Endothelial cell of umbilical vein (primary cell): ENCODE measurements at regions of chr17 and their contacts with region 1.

Region 1: GRCh38 chr17:19377602-19378392 is 501 bp upstream of the MAPK7 start:
- DNase-seq: peak; percentile 100
- H3K4me3 ChIP-seq: peak overlapping the region; percentile 72 to 94 (median 73)
- H3K27ac ChIP-seq: peak overlapping the region; percentile 59
- H3K4me1 ChIP-seq: peaks cover 7% of the 10 kb centered on the region
- H3K27me3 ChIP-seq: no peaks in the 10 kb centered on the region
- CTCF ChIP-seq: no peak
- POLR2A ChIP-seq: peak; percentile 83

Region 2: DNA sequence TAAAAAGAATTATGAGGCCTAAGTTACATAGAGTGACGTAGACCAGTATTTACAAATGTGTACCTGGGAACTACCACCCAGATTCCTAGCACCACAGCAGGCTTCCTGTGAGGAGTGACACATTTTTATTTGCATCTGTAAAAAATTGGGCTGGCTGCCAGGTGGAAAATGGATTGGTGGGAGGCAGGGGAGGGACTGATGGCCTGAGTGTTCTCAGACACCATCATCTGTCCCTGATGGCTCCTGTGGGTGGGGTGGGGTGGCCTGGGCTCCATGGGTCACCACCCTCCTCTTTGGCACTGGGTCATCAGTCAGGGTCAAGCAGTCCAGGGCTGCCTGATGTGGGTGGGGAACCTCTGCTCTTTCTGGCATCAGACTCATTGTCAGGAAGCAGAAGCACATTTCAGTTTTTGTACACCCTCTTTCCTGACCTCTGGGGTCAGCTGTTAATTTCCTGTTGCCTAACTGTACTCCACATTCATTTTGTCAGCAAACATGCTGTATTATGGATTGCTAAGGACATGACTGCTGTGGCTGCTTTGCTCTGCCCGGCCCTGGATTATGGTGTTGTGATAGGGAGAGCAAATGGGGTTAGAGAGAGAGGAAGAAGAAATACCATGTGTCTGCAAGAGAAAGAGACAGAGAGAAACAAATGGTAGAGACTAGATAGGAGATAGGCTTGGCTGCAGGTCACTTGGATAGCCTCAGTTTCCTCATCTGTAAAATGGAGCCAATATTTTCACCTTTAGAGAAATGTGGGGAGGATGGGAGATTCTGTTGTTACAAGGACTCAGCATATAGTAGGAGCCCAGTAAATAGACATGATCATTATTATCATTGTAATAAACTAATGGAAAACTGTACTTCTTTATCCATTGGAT is 20.7 kb after region 1 on chr17:
- CTCF ChIA-PET with region 1: no interaction called
- POLR2A ChIA-PET with region 1: no interaction called
- dilution Hi-C with region 1: no loop called
- intact Hi-C with region 1: no loop called
- DNase-seq: peak; percentile 68
- H3K4me3 ChIP-seq: no peak overlapping the region
- H3K27ac ChIP-seq: no peak overlapping the region
- H3K4me1 ChIP-seq: peaks cover 10% of the 10 kb centered on the region
- H3K27me3 ChIP-seq: peaks cover 0 to 2% of the 10 kb centered on the region in 2 experiments
- CTCF ChIP-seq: no peak
- POLR2A ChIP-seq: no peak

Region 3: GRCh38 chr17:19410875-19411620 is 33.3 kb after region 1 on chr17 and contains the start of gene RNF112:
- CTCF ChIA-PET with region 1: no interaction called
- POLR2A ChIA-PET with region 1: no interaction called
- dilution Hi-C with region 1: no loop called
- intact Hi-C with region 1: no loop called
- DNase-seq: no peak
- H3K4me3 ChIP-seq: no peak within 1 kb of the TSS
- H3K27ac ChIP-seq: no peak within 1 kb of the TSS
- H3K4me1 ChIP-seq: no peaks in the 10 kb centered on the region
- H3K27me3 ChIP-seq: peaks cover 4 to 7% of the 10 kb centered on the region in 2 experiments
- CTCF ChIP-seq: no peak
- POLR2A ChIP-seq: no peak
- total RNA-seq, gene RNF112: 0.11 TPM in 1 of 2 replicates, not detected in the other

Region 4: DNA sequence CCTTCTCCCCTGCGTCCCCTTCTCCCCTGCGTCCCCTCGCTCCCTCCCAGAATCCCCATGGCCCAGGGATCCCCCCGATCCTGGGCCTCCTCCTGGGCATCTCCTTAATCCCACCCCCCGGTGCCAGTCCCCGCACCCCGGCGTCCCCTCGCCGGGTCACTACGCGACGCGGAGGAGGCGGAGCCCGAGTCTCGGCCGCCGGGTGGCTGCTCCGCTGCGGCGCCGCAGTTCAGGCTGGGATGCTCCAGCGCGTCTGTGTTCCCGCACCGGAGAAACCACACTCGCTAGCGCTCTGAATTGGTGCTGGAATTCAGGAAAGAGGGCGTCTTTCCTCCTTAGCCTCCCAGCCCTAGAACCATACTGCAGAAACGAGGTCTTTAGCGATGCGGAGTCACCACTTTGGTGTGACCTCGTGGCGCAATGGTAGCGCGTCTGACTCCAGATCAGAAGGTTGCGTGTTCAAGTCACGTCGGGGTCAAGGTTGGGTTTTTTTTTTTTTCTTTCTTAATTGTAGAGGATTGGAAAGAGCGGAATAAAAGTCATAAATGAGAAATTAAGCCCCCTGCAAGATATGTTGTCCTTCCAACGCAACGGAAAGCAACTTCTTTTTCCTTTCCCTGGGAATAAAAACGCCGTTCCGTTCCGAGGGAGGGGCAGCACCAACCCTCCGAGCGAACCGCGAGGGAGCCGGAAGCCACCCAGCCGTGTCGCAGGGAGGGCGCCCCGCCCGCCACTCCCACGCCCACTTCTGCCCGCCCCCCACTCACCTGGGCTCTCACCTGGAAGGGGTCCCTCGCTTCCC is 130.2 kb after region 1 on chr17:
- CTCF ChIA-PET with region 1: no interaction called
- POLR2A ChIA-PET with region 1: no interaction called
- dilution Hi-C with region 1: no loop called
- intact Hi-C with region 1: loop called (anchors 5 kb)
- DNase-seq: peak; percentile 93
- H3K4me3 ChIP-seq: peak overlapping the region; percentile 47 to 82 (median 67)
- H3K27ac ChIP-seq: no peak overlapping the region
- H3K4me1 ChIP-seq: peaks cover 3% of the 10 kb centered on the region
- H3K27me3 ChIP-seq: no peaks in the 10 kb centered on the region
- CTCF ChIP-seq: no peak
- POLR2A ChIP-seq: no peak